Posterior vena cava (tissue), 2 donors: ENCODE measurements at regions of chr9 and their contacts with region 1.

Region 1: GRCh38 chr9:113261917-113262671 is 13.3 kb downstream of the CDC26 start:
- DNase-seq: no peak

Region 2: DNA sequence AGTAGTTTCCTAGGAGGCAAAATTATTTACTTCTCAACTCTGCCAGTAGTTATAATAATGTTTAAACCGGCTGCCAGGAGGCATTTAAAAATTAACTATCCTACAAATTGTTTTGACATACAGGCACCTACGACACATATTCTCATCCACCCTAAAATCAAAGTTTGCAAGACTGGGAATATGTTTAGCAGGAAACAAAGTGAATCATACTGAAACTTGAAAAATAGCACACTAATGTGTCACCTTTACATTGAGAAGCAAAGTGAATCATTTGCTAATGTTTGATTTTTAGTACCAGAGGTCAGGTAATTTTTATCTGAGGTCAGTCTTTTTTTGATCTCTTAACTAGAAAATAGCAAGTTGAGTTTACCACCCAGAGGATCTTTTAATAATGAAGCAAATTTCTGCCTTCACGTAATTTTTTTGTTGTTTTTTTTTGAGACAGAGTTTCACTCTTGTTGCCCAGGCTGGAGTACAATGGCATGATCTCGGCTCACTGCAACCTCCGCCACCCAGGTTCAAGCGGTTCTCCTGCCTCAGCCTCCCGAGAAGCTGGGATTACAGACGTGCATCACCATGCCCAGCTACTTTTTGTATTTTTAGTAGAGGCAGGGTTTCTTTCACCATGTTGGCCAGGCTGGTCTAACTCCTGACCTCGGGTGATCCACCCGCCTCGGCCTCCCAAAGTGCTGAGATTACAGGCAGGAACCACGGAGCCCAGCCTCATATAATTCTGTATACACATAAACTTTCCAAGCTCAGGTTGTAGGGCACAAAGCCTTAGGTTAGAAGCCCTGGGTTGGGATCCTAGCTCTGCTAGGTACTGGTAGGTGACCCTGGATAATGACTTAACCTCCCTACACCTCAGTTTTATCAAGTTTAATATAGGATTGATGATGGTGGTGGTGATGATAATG is 1241.2 kb before region 1 on chr9:
- intact Hi-C with region 1: no loop called
- DNase-seq: no peak

Region 3: GRCh38 chr9:112629671-112630485 is 632.2 kb before region 1 on chr9:
- intact Hi-C with region 1: loop called in 1 of 2 experiments (anchors 5 kb)
- DNase-seq: no peak

Region 4: GRCh38 chr9:113187935-113188595 is 74.0 kb before region 1 on chr9:
- intact Hi-C with region 1: no loop called
- DNase-seq: peak; percentile 89

Region 5: DNA sequence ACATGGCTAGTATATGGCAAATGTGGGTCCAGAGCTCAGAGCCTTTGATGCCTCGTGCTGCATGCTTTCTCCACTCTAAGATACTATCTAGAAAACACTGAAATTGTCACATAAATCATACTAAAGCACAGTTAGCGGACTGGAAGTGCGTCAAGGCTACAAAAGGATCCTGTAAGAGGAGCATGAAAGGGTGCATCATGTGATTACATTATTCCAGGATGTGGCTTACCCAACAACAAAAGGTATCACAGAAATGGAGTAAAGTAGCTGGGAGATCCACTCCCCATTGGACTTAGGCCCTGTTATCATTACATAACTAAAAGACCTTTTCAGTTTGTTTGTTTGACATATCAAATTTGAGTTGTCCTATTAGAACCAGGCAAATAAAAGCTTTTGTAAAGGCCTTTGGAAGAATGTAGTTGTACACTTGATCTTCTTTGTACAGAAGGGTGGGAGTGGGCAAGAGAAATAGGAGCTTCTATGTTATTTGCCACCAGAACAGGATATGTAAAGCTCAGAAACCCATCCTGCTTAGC is 33.9 kb before region 1 on chr9:
- intact Hi-C with region 1: no loop called
- DNase-seq: no peak